ENCODE measurements at regions of chr4 and their contacts with region 1.

Region 1: GRCh38 chr4:26992657-26993361 is 132.2 kb downstream of the STIM2 start:
- DNase-seq: peak; percentile 92
- ATAC-seq: peak; percentile 78
- H3K4me3 ChIP-seq: peak overlapping the region; percentile 10 to 54 (median 36)
- H3K4me3 Mint-ChIP-seq: no peak overlapping the region
- H3K27ac ChIP-seq: peak overlapping the region; percentile 97 to 99
- H3K27ac Mint-ChIP-seq: no peak overlapping the region
- H3K4me1 ChIP-seq: peaks cover 37 to 52% of the 10 kb centered on the region in 2 donors
- H3K4me1 Mint-ChIP-seq: peaks cover 36% of the 10 kb centered on the region
- H3K27me3 ChIP-seq: no peaks in the 10 kb centered on the region
- H3K27me3 Mint-ChIP-seq: no peaks in the 10 kb centered on the region
- CTCF ChIP-seq: no peak

Region 2: DNA sequence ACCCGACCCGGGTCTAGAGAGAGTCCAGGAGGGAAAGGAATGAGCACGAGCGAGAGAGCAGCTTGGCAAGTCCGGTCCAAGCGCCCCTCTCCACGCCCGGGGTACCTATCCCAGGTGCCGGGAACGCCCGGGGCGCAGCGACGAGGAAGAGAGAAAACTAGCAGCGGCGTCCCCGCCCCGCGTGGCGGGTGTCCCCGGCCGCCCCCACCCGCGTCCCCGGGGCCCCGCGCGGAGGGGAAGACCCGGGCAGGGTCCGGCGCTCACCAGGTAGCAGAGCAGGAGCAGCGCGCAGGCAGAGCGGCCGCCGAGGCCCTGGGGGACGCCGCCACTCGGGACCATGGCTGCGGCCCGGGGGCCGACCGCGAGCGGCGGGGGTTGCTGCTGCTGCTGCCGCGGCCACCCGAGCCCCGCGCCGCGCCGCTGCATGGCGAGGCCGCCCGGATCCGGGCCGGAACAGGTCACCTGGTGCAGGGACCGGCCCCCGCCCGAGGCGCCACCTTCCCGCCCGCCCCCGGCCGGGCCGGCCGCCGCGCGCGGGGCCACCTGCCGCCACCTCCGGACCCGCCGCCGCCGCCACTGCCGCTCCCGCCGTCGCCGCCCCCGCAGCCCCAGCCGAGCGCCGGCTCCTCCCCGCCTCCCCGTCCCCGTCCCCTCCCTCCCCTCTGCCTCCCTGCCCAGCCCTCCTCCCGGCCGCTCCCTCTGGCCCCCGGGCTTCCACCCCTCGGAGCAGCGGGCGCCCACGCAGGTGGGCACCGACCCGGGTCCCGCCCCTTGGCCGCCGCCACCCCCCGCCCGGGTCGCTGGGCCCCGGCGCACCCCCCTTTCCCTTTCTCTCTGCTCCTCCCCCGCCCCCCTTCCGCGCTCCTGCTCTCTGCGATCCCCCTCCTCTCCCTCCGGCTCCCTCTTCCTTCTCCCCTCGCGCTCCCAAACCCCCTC is 1130.1 kb before region 1 on chr4 and contains the start of gene SEL1L3:
- CTCF ChIA-PET with region 1: no interaction called
- POLR2A ChIA-PET with region 1: no interaction called
- intact Hi-C with region 1: loop called (anchors 5 kb)
- DNase-seq: peak; percentile 78
- ATAC-seq: peak; percentile 53
- H3K4me3 ChIP-seq: peak within 1 kb of the TSS; percentile 71 to 90 (median 82)
- H3K4me3 Mint-ChIP-seq: peak within 1 kb of the TSS; percentile 93
- H3K27ac ChIP-seq: peak within 1 kb of the TSS; percentile 86 to 88
- H3K27ac Mint-ChIP-seq: peak within 1 kb of the TSS; percentile 95
- H3K4me1 ChIP-seq: peaks cover 78 to 79% of the 10 kb centered on the region in 2 donors
- H3K4me1 Mint-ChIP-seq: peaks cover 78% of the 10 kb centered on the region
- H3K27me3 ChIP-seq: no peaks in the 10 kb centered on the region
- H3K27me3 Mint-ChIP-seq: no peaks in the 10 kb centered on the region
- CTCF ChIP-seq: no peak
- total RNA-seq, gene SEL1L3: 280 and 291 TPM in 2 replicates

Region 3: DNA sequence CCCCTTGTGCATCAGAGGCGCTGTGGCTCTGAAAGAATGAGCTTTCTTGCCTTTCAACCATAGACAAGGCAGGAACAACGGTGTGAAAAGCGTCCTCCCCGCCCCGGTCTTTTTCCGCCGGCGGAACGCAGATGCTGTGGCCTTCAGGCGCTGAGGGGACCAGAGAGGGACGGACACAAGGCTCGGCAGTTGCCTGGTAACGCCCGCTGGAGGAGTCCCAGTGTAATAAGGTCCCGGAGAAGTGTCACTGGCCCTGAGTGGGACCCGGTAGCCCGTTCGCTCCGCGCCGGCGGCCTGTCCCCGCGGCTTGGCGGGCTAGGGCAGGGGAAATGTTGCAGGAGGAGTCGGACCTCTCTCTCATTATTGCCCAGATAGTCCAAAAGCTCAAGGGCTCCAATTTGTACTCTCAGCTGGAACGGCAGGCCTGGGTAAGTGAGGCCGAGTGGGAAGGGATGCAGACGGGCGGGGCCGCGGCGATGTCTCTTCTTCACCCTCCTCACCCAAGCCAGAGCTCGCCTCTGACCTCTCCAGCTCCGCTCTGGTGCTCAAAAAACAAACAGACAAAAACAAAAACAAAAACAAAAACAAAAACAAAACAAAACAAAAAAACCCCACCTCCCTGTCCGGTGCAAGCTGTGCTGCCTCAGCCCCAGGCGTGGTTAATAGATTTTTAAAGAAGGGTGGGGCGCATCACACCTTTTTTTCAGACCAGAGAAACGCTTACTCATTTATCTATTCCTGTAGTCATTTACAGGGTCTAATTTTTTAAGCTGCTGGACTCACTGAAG is 408.8 kb before region 1 on chr4 and contains the start of gene TBC1D19:
- CTCF ChIA-PET with region 1: no interaction called
- POLR2A ChIA-PET with region 1: no interaction called
- intact Hi-C with region 1: loop called (anchors 5 kb)
- DNase-seq: peak; percentile 90
- ATAC-seq: peak; percentile 95
- H3K4me3 ChIP-seq: peak within 1 kb of the TSS; percentile 43 to 92 (median 82)
- H3K4me3 Mint-ChIP-seq: peak within 1 kb of the TSS; percentile 88
- H3K27ac ChIP-seq: peak within 1 kb of the TSS; percentile 85 to 87
- H3K27ac Mint-ChIP-seq: peak within 1 kb of the TSS; percentile 91
- H3K4me1 ChIP-seq: peaks cover 11 to 13% of the 10 kb centered on the region in 2 donors
- H3K4me1 Mint-ChIP-seq: peaks cover 26% of the 10 kb centered on the region
- H3K27me3 ChIP-seq: no peaks in the 10 kb centered on the region
- H3K27me3 Mint-ChIP-seq: peaks cover 7% of the 10 kb centered on the region
- CTCF ChIP-seq: no peak
- total RNA-seq, gene TBC1D19: 10.0 and 11.0 TPM in 2 replicates

Region 4: GRCh38 chr4:26860157-26860921 is 132.5 kb before region 1 on chr4 and contains the start of gene STIM2:
- CTCF ChIA-PET with region 1: interaction called, 14 read pairs
- POLR2A ChIA-PET with region 1: interaction called, 13 read pairs
- intact Hi-C with region 1: loop called (anchors 1 kb)
- DNase-seq: peak; percentile 99
- ATAC-seq: peak; percentile 64
- H3K4me3 ChIP-seq: peak within 1 kb of the TSS; percentile 75 to 95 (median 80)
- H3K4me3 Mint-ChIP-seq: peak within 1 kb of the TSS; percentile 100
- H3K27ac ChIP-seq: peak within 1 kb of the TSS; percentile 77 to 86
- H3K27ac Mint-ChIP-seq: peak within 1 kb of the TSS; percentile 99
- H3K4me1 ChIP-seq: peaks cover 37 to 56% of the 10 kb centered on the region in 2 donors
- H3K4me1 Mint-ChIP-seq: peaks cover 61% of the 10 kb centered on the region
- H3K27me3 ChIP-seq: no peaks in the 10 kb centered on the region
- H3K27me3 Mint-ChIP-seq: no peaks in the 10 kb centered on the region
- CTCF ChIP-seq: peak; percentile 52
- total RNA-seq, gene STIM2: 96.0 and 103 TPM in 2 replicates

Region 5: DNA sequence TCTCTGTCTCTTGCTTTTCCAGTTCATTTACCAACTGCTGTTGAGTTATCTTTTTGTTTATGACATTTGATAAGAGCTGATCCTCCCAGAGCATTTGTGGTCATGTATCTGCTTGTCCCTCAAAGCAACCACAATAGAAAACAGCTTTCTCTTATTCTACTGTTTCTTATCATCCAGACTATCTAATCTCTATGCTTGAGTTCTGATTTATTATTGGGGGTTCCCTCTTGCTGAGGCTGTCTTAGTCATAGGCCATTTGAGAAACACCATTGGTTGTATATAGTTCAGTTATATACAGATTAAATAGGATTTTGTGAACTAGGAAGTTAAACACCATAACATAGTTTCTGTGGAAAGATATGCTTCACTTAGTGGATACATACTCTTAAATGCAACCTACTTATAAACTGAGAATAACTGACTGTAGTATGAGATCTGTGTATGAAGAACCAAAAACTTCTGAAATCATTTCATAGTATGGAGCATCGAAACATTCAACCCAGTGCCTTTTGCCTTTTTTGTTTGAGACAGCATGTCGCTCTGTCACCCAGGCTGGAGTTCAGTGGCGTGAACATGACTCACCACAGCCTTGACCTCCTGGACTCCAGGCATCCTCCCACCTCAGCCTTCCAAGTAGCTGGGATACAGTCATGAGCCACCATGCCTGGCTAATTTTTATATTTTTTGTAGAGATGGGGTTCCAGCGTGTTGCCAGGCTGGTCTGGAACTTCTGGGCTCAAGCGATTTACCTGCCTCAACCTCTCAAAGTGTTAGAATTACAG is 56.3 kb before region 1 on chr4:
- CTCF ChIA-PET with region 1: interaction called, 3 read pairs
- POLR2A ChIA-PET with region 1: interaction called, 10 read pairs
- intact Hi-C with region 1: no loop called
- DNase-seq: no peak
- ATAC-seq: no peak
- H3K4me3 ChIP-seq: no peak overlapping the region
- H3K4me3 Mint-ChIP-seq: peak overlapping the region; percentile 4
- H3K27ac ChIP-seq: peak overlapping the region in 1 of 2 donors; percentile 72
- H3K27ac Mint-ChIP-seq: peak overlapping the region; percentile 59
- H3K4me1 ChIP-seq: peaks cover 34 to 43% of the 10 kb centered on the region in 2 donors
- H3K4me1 Mint-ChIP-seq: peaks cover 57% of the 10 kb centered on the region
- H3K27me3 ChIP-seq: no peaks in the 10 kb centered on the region
- H3K27me3 Mint-ChIP-seq: no peaks in the 10 kb centered on the region
- CTCF ChIP-seq: no peak

Region 6: GRCh38 chr4:26978387-26979053 is 14.3 kb before region 1 on chr4:
- CTCF ChIA-PET with region 1: interaction called, 4 read pairs
- POLR2A ChIA-PET with region 1: no interaction called
- intact Hi-C with region 1: loop called (anchors 2 kb)
- DNase-seq: peak; percentile 57
- ATAC-seq: peak; percentile 51
- H3K4me3 ChIP-seq: no peak overlapping the region
- H3K4me3 Mint-ChIP-seq: peak overlapping the region; percentile 53
- H3K27ac ChIP-seq: peak overlapping the region; percentile 55 to 93
- H3K27ac Mint-ChIP-seq: peak overlapping the region; percentile 89
- H3K4me1 ChIP-seq: peaks cover 13 to 19% of the 10 kb centered on the region in 2 donors
- H3K4me1 Mint-ChIP-seq: peaks cover 44% of the 10 kb centered on the region
- H3K27me3 ChIP-seq: no peaks in the 10 kb centered on the region
- H3K27me3 Mint-ChIP-seq: no peaks in the 10 kb centered on the region
- CTCF ChIP-seq: no peak

Measured in B cell (primary cell).